ENCODE measurements at regions of chr22 and their contacts with region 1.

Region 1: GRCh38 chr22:20606041-20606783 is 98.8 kb downstream of the MED15 start:
- DNase-seq: peak; percentile 83 to 85
- H3K4me3 ChIP-seq: no peak overlapping the region
- H3K27ac ChIP-seq: no peak overlapping the region
- H3K4me1 ChIP-seq: peaks cover 0 to 20% (median 8%) of the 10 kb centered on the region in 4 experiments; a peak in 5 of 7 replicates
- H3K27me3 ChIP-seq: no peaks in the 10 kb centered on the region
- CTCF ChIP-seq: peak; percentile 88 to 97 (median 96)
- EP300 ChIP-seq: peak in 1 of 2 experiments; percentile 69; a peak in 1 of 3 replicates
- POLR2A ChIP-seq: no peak
- RAD21 ChIP-seq: peak; percentile 88 to 94

Region 2: DNA sequence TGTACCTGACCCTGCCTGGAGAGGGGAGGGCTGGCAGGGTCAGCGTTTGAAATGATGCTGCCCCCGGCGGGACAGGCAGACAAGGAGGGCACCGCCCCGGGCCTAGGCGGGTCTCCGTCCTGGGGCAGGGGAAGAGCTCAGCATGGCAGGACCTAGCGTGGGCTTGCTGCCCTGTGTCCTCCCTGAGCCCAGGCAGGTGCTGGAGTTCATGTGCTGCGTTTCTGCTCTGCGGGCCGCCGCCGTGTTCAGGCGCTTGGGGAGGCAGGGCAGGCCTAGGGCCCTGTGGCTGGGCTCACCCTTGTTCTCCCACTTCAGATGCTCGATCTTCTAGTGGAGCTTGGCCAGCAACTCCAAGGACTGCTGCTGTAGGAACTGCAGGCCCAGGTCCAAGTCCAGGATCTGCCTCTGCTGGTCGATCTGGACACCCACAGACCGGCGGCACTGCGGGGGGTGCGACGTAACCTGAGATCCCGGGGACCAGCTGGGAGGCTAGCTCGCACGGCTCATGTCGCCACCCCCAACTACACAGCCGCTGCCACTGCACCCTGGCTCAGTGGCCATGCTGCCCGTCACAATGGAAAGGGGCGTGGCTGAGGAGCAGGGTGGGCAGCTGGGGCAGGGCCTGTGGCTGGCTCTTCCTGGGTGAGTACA is 14.4 kb before region 1 on chr22:
- CTCF ChIA-PET with region 1: interaction called, 28 read pairs
- POLR2A ChIA-PET with region 1: no interaction called
- DNase-seq: peak; percentile 23 to 79
- H3K4me3 ChIP-seq: no peak overlapping the region
- H3K27ac ChIP-seq: no peak overlapping the region
- H3K4me1 ChIP-seq: peaks cover 0 to 6% (median 4%) of the 10 kb centered on the region in 4 experiments; a peak in 4 of 7 replicates
- H3K27me3 ChIP-seq: no peaks in the 10 kb centered on the region
- CTCF ChIP-seq: no peak
- EP300 ChIP-seq: no peak
- POLR2A ChIP-seq: no peak
- RAD21 ChIP-seq: no peak

Region 3: GRCh38 chr22:20618488-20618887 is 12.3 kb after region 1 on chr22:
- CTCF ChIA-PET with region 1: interaction called, 14 read pairs
- POLR2A ChIA-PET with region 1: interaction called, 3 read pairs
- DNase-seq: no peak
- H3K4me3 ChIP-seq: no peak overlapping the region
- H3K27ac ChIP-seq: no peak overlapping the region
- H3K4me1 ChIP-seq: no peaks in the 10 kb centered on the region
- H3K27me3 ChIP-seq: no peaks in the 10 kb centered on the region
- CTCF ChIP-seq: no peak
- EP300 ChIP-seq: no peak
- POLR2A ChIP-seq: no peak
- RAD21 ChIP-seq: no peak

Region 4: DNA sequence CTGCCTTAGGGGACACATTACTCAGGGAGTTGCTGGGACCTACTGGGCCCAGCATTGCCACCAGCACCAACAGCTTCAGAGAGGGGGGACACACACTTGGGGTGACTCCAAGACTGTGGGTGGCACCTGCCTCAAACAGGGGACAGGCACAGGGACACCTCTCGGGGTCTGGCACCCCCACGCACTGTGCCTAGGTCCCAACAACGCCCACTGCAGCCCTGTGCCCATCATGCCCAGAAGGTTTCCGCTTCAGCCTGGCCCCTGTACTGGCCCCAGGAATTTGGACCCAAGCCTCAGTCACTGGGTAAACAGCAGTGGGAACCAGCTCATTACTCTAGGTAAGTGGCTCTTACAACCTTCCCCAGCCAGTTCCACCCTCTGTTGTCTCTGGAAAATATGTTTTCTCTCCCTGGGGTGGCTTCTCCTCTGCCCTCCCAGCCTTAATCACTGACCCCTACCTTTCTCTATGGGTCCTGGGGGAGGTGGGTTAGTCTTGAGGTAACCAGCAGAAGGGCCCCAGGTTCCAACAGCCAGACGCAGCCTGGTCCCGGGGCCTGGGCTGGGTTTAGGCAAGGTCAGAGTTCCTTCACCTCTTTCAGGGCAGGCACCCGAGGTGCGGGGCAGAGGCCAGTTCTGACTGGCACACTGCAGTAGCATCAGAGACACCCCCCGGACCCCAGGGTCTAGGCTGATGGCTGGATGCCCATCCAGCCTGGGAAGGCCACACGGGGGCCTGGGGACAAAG is 24.8 kb after region 1 on chr22:
- CTCF ChIA-PET with region 1: interaction called, 16 read pairs
- POLR2A ChIA-PET with region 1: no interaction called
- DNase-seq: no peak
- H3K4me3 ChIP-seq: no peak overlapping the region
- H3K27ac ChIP-seq: no peak overlapping the region
- H3K4me1 ChIP-seq: no peaks in the 10 kb centered on the region
- H3K27me3 ChIP-seq: no peaks in the 10 kb centered on the region
- CTCF ChIP-seq: no peak
- EP300 ChIP-seq: no peak
- POLR2A ChIP-seq: no peak
- RAD21 ChIP-seq: no peak

Region 5: DNA sequence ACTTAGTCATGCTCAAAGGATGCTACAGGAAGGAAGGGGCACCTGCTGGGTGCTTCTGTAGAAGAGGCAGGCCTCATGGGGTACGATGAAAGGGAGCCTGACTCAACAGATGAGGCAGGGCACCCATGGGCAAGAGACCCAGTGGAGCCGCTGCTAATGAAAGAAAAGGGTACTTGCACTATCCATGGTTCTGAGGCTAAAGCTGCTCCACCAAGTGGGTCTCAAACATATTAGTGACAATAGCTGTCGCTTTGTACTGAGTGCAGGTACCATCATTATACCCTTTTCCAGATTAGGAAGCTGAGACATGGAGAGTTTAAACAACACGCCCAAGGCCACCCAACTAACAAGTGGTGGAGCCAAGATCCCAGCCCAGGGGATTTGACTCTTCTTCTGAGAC is 40.2 kb after region 1 on chr22:
- CTCF ChIA-PET with region 1: interaction called, 11 read pairs
- POLR2A ChIA-PET with region 1: interaction called, 4 read pairs
- DNase-seq: no peak
- H3K4me3 ChIP-seq: no peak overlapping the region
- H3K27ac ChIP-seq: no peak overlapping the region
- H3K4me1 ChIP-seq: no peaks in the 10 kb centered on the region
- H3K27me3 ChIP-seq: no peaks in the 10 kb centered on the region
- CTCF ChIP-seq: no peak
- EP300 ChIP-seq: no peak
- POLR2A ChIP-seq: no peak
- RAD21 ChIP-seq: no peak

Measured in H1 (cell line).